GM12878 (cell line): ENCODE measurements at regions of chr1 and their contacts with region 1.

Region 1: DNA sequence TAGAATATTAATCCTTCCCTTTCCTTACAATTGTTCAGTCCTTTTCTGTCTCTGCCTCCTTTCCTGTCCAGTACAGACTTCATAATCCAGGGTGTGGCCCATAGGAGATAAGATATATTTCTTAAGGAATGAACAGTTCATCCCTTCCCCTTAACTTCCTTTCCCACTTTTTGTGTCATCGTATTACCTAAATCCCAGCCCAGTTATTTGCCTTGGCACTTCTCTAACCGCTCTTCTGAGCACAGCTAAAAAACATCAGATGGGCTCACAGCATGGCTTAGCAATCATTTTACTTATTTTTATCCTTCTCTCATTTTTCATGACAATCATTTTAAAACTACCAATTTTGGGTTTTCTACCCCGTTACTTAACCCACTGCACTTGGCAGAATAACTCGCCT is 39.6 kb downstream of the F3 start:
- DNase-seq: no peak
- ATAC-seq: no peak
- H3K4me3 ChIP-seq: no peak overlapping the region
- H3K27ac ChIP-seq: no peak overlapping the region
- H3K4me1 ChIP-seq: no peaks in the 10 kb centered on the region
- H3K27me3 ChIP-seq: no peaks in the 10 kb centered on the region
- CTCF ChIP-seq: no peak
- EP300 ChIP-seq: no peak
- POLR2A ChIP-seq: no peak
- RAD21 ChIP-seq: no peak

Region 2: DNA sequence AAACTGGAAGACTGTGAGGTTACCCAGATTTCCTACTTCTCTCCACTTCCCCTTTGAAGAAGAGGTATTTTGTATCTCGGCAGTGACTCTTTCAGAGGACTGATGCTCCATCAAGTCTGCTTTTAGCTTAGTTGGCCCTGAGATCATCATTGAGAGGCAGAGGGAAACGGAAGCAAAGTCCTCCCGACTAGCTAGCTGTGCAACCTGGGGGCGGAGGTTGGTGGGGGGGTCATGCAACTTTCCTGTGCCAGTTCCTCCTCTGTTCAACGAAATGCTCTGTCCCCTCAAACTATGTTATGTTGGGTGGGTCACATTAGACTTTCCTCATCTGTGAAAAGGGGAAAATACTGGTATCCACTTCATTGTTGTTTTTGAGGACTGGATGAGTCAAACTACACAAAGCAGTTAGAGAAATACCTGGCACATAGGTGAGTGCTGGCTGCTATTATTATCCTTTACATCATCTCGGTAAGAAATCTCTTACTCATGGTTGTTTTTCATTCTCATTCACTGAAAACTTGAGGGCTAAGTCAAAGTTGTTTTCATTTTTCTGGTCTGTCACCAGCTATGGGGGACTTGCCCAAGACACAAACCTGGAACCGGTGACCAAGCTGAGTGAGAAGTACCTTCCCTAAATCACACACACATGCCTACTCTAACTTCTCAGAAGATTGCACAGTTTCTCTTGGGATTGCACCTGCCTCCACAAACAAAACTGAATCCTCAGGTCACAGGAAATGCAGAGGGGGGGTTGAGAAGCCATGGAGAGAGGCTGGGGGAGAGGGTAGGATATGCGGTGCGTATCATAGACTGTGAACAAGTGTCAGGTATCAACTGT is 464.3 kb before region 1 on chr1:
- CTCF ChIA-PET with region 1: no interaction called
- POLR2A ChIA-PET with region 1: no interaction called
- RAD21 ChIA-PET with region 1: no interaction called
- SMC1A ChIA-PET with region 1: no interaction called
- in situ Hi-C with region 1: no loop called
- intact Hi-C with region 1: no loop called
- DNase-seq: no peak
- ATAC-seq: peak; percentile 75
- H3K4me3 ChIP-seq: no peak overlapping the region
- H3K27ac ChIP-seq: no peak overlapping the region
- H3K4me1 ChIP-seq: peaks cover 6% of the 10 kb centered on the region; the same call in 1 of the 2 replicates
- H3K27me3 ChIP-seq: no peaks in the 10 kb centered on the region; a peak in 1 of 4 replicates
- CTCF ChIP-seq: no peak
- EP300 ChIP-seq: no peak
- POLR2A ChIP-seq: no peak
- RAD21 ChIP-seq: no peak

Region 3: GRCh38 chr1:94481473-94481933 is 20.4 kb before region 1 on chr1:
- CTCF ChIA-PET with region 1: interaction called, 18 read pairs
- POLR2A ChIA-PET with region 1: no interaction called
- RAD21 ChIA-PET with region 1: no interaction called
- SMC1A ChIA-PET with region 1: interaction called, 6 read pairs
- in situ Hi-C with region 1: no loop called
- intact Hi-C with region 1: no loop called
- DNase-seq: peak; percentile 9
- ATAC-seq: peak; percentile 98
- H3K4me3 ChIP-seq: no peak overlapping the region
- H3K27ac ChIP-seq: no peak overlapping the region
- H3K4me1 ChIP-seq: no peaks in the 10 kb centered on the region
- H3K27me3 ChIP-seq: no peaks in the 10 kb centered on the region
- CTCF ChIP-seq: peak; percentile 79 to 84 (median 83)
- EP300 ChIP-seq: no peak
- POLR2A ChIP-seq: no peak
- RAD21 ChIP-seq: peak; percentile 82

Region 4: DNA sequence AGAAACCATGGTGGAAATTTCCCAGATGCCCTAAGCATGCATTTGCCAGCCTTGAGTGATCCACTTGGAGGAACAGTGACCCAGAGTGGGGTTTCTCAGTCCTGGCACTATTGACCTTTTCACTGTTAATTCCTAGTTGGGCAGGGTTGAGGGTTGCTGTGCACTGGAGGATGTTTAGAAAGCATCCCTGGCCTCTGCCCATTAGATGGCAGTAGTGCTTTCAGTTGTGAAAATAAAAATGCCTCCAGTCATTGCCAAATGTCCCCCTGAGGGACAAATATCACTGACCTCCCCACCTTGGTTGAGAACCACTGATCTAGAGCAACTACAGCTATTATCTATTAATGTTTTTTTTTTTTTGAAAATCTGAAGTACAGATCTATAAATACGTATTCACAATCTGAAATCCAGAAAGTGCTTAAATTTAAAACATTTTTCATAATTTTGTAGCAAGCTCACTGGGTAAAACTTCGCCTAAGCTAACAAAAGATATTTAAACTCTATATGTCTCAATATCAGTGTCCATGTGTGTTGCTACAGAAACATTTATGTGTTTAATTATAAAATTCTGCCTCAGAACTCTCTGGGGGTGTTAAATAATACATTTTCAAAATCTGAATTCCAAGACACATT is 12.3 kb after region 1 on chr1:
- CTCF ChIA-PET with region 1: interaction called, 27 read pairs
- POLR2A ChIA-PET with region 1: no interaction called
- RAD21 ChIA-PET with region 1: no interaction called
- SMC1A ChIA-PET with region 1: interaction called, 3 read pairs
- in situ Hi-C with region 1: no loop called
- intact Hi-C with region 1: no loop called
- DNase-seq: no peak
- ATAC-seq: peak; percentile 78
- H3K4me3 ChIP-seq: no peak overlapping the region
- H3K27ac ChIP-seq: no peak overlapping the region
- H3K4me1 ChIP-seq: no peaks in the 10 kb centered on the region
- H3K27me3 ChIP-seq: no peaks in the 10 kb centered on the region
- CTCF ChIP-seq: peak; percentile 48 to 55 (median 53); a peak in 5 of 6 replicates
- EP300 ChIP-seq: no peak
- POLR2A ChIP-seq: no peak
- RAD21 ChIP-seq: peak; percentile 56

Region 5: GRCh38 chr1:94562519-94563260 is 60.8 kb after region 1 on chr1:
- CTCF ChIA-PET with region 1: no interaction called
- POLR2A ChIA-PET with region 1: no interaction called
- RAD21 ChIA-PET with region 1: no interaction called
- SMC1A ChIA-PET with region 1: no interaction called
- in situ Hi-C with region 1: no loop called
- intact Hi-C with region 1: no loop called
- DNase-seq: no peak
- ATAC-seq: no peak
- H3K4me3 ChIP-seq: no peak overlapping the region
- H3K27ac ChIP-seq: no peak overlapping the region
- H3K4me1 ChIP-seq: no peaks in the 10 kb centered on the region
- H3K27me3 ChIP-seq: no peaks in the 10 kb centered on the region
- CTCF ChIP-seq: no peak
- EP300 ChIP-seq: no peak
- POLR2A ChIP-seq: no peak
- RAD21 ChIP-seq: no peak

Region 6: GRCh38 chr1:94773931-94774422 is 272.0 kb after region 1 on chr1:
- CTCF ChIA-PET with region 1: no interaction called
- POLR2A ChIA-PET with region 1: no interaction called
- RAD21 ChIA-PET with region 1: no interaction called
- SMC1A ChIA-PET with region 1: no interaction called
- in situ Hi-C with region 1: no loop called
- intact Hi-C with region 1: no loop called
- DNase-seq: no peak
- ATAC-seq: no peak
- H3K4me3 ChIP-seq: no peak overlapping the region
- H3K27ac ChIP-seq: no peak overlapping the region
- H3K4me1 ChIP-seq: no peaks in the 10 kb centered on the region
- H3K27me3 ChIP-seq: no peaks in the 10 kb centered on the region
- CTCF ChIP-seq: no peak
- EP300 ChIP-seq: no peak
- POLR2A ChIP-seq: no peak
- RAD21 ChIP-seq: no peak